Activated CD4-positive, alpha-beta memory T cell treated with anti-CD3 and anti-CD28 coated beads for 36 hours (primary cell): ENCODE measurements at regions of chr2 and their contacts with region 1.

Region 1: DNA sequence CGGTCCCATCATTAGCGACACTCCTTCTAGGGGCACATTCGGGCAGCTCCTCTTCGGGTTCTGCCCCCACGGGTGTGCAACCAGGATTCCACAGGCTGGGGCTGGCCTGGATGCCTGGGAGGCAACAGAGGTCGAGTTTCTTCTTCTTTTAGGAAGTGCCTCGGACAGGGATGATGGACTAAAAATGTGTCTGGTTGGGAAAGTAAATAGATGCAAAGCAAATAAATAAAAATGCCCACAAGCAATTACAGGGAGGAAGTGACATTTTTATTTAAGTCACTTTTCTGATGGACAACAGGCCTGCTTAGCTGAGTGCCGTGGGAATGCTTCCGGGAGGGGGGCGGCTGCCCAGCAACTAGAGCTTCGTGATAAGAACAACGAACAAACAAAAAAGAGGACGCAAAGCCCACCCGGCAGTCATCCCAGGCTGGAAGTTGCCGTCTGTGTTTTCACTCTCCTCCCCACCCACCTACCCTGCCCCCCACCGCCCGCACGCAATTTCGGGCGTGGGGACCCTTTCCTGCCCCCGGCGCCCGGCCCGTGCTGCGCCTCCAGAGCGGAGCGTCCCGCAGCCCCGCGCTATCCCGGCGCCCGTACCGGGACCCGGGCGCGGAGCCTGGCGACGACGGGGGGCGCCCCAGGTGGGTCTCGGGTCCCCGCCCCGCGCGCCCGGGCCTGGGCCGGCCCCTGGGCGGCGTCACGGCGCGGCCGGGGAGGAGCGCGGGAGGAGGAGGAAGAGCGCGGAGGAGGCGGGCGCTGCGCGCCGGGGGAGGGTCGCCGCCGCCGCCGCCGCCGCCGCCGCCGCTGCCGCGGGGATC is 412 bp upstream of the NCK2 start:
- DNase-seq: peak; percentile 70
- H3K4me3 Mint-ChIP-seq: peak overlapping the region; percentile 76
- H3K27ac Mint-ChIP-seq: peak overlapping the region; percentile 86
- H3K4me1 Mint-ChIP-seq: peaks cover 80% of the 10 kb centered on the region
- H3K27me3 Mint-ChIP-seq: no peaks in the 10 kb centered on the region

Region 2: DNA sequence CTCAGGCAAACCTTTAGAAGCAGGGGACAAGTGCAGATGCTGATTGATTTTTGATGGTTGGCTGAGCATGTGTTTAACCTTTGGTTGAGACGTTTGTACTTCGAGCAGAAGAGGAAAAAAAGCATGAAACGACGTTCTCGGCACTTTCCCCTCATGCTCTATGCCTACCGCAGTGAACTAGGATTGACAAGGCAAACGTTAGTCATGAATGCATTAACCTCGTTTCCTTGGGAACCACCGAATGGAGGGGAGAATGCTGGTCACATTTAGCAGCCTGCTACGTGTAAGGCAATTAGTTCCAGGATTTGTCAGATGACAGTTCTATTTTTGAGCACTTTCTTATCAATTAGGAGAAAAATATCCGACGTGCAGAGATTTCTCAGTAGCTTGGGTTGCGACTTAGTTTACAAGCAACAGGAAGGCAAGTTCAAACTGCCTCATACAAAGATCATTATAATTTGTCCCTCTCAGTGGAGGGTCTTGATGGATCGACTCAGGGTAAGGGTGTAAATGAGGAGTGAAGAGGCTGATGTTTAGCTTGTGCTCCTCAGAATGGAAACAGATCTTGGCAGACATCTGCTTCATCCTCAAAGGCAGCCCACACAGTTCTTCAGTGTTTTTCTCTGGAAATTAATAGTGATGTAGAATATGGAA is 550.2 kb before region 1 on chr2:
- CTCF ChIA-PET with region 1: no interaction called
- POLR2A ChIA-PET with region 1: no interaction called
- intact Hi-C with region 1: no loop called
- DNase-seq: no peak
- H3K4me3 Mint-ChIP-seq: no peak overlapping the region
- H3K27ac Mint-ChIP-seq: no peak overlapping the region
- H3K4me1 Mint-ChIP-seq: no peaks in the 10 kb centered on the region
- H3K27me3 Mint-ChIP-seq: peaks cover 20% of the 10 kb centered on the region

Region 3: DNA sequence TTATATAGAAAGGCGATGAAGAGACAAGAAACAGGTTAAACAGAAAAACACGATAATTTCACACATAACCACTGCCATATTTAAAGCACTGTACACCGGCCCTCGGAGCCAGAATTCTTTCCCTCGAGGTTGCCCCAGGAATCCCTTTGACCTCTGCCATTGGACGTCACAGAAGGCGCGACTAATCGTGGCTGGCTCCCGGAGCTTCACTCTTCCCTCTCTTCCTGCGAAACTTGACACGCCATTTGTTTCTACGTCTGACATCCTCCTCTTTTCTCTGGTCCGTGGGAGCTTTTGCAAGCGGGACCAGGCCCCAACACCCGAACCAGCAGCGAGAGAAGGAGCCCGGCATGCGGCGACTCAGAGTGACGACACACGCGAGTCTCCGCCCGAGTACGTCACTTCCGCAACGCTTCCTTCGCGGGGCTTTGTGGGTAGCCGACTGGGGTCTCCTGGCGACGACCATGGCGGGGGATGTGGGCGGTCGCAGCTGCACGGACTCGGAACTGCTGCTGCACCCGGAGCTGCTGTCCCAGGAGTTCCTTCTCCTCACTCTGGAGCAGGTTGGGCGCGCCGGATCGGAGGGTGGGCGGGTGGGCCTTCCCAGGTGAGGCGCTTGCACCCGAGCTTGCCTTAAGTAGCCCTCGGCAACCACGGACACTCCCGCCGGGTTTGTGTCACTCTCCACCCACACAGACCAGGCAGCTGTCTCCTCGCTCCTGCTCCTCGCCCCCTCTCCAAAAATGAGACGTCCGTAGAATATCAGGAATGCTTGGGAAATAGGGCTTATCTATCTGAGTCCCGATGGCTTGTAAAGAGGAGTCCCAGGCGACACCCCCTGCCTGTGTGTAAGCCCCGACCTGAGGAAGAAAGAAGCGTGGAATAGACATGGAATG is 406.9 kb before region 1 on chr2 and contains the start of gene C2orf49:
- CTCF ChIA-PET with region 1: no interaction called
- POLR2A ChIA-PET with region 1: no interaction called
- intact Hi-C with region 1: loop called (anchors 10 kb)
- DNase-seq: peak; percentile 93
- H3K4me3 Mint-ChIP-seq: peak within 1 kb of the TSS; percentile 95
- H3K27ac Mint-ChIP-seq: peak within 1 kb of the TSS; percentile 99
- H3K4me1 Mint-ChIP-seq: peaks cover 33% of the 10 kb centered on the region
- H3K27me3 Mint-ChIP-seq: no peaks in the 10 kb centered on the region
- total RNA-seq, gene C2orf49: 16.9 to 20.2 TPM

Region 4: DNA sequence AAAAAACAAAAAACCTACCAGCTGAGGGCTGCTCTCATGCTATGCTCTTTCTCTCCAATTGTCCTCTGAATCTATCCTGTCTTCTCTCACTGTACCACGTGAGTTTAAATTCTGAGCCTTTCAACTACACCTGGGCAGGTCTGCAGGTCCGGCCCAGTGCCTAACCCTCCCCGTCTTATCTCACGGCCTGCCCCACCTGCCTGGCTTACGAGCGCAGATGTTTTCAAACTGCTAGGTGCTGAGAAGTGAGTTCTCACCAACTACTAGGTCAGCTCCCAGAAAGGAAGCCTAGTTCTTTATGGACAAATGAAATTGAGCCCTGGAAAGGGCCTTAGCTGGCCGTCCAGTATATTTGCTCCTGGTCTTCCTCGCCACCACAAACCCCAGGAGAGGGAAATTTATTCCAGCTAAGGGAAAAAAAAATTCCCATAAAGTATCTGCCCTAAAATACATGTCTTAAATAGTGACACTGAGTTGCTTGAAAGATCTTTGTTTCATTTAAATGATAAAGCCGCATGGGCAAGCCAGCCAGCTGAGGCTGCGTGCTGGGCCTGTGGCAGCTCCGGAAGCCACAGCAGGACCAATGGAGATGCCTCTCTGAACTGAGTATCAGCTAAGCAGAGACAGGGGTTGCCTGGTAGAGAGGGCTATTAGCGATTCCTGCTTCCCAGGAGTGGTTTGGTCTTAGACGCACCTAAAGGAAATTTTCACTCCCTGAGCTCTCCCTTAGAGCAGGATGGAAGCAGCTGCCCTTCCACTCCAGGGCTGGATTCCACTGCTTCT is 92.1 kb before region 1 on chr2:
- CTCF ChIA-PET with region 1: no interaction called
- POLR2A ChIA-PET with region 1: interaction called, 4 read pairs
- intact Hi-C with region 1: loop called (anchors 5 kb)
- DNase-seq: no peak
- H3K4me3 Mint-ChIP-seq: no peak overlapping the region
- H3K27ac Mint-ChIP-seq: no peak overlapping the region
- H3K4me1 Mint-ChIP-seq: peaks cover 4% of the 10 kb centered on the region
- H3K27me3 Mint-ChIP-seq: no peaks in the 10 kb centered on the region

Region 5: DNA sequence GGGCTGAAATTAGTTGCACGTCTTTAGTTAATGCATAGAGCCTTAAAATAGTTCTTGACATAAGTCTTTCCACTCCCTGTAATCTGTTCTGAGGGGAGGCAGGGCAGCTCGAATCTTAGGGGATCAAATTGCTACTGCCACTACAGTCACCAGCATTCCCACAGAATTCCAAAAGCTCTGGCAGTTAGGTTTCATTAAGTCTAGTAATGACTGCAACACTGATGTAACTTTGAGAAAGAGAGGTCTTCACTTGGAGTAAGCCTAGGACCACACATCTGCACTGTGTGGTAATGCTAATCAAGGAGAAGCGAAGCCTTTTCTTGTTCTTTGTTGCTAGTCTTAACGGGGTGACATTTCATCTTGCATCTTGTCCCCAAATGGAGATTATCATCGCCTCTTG is 18.9 kb before region 1 on chr2:
- CTCF ChIA-PET with region 1: no interaction called
- POLR2A ChIA-PET with region 1: no interaction called
- intact Hi-C with region 1: no loop called
- DNase-seq: no peak
- H3K4me3 Mint-ChIP-seq: no peak overlapping the region
- H3K27ac Mint-ChIP-seq: no peak overlapping the region
- H3K4me1 Mint-ChIP-seq: peaks cover 8% of the 10 kb centered on the region
- H3K27me3 Mint-ChIP-seq: no peaks in the 10 kb centered on the region

Region 6: DNA sequence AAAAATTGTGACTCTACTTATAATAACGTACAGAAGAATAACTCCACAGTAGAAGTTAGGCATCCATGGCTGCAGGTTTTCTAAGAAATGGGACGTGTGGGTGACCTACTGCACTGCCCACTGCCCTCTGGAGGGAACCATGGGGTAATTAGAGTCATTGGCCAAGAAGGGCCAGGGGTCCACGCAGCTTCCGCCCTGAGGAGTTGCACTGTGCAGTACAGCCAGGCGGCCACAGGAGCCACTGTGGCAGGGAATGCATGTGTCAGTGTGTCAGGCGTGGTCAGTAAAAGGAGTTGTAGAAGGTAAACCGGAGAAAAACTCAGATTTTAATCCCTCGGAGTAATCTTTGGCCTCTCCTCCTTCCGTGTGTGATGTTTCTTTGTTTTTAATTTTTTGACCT is 25.2 kb after region 1 on chr2:
- CTCF ChIA-PET with region 1: interaction called, 9 read pairs
- POLR2A ChIA-PET with region 1: interaction called, 49 read pairs
- intact Hi-C with region 1: no loop called
- DNase-seq: peak; percentile 39
- H3K4me3 Mint-ChIP-seq: no peak overlapping the region
- H3K27ac Mint-ChIP-seq: peak overlapping the region; percentile 90
- H3K4me1 Mint-ChIP-seq: peaks cover 91% of the 10 kb centered on the region
- H3K27me3 Mint-ChIP-seq: no peaks in the 10 kb centered on the region

Region 7: DNA sequence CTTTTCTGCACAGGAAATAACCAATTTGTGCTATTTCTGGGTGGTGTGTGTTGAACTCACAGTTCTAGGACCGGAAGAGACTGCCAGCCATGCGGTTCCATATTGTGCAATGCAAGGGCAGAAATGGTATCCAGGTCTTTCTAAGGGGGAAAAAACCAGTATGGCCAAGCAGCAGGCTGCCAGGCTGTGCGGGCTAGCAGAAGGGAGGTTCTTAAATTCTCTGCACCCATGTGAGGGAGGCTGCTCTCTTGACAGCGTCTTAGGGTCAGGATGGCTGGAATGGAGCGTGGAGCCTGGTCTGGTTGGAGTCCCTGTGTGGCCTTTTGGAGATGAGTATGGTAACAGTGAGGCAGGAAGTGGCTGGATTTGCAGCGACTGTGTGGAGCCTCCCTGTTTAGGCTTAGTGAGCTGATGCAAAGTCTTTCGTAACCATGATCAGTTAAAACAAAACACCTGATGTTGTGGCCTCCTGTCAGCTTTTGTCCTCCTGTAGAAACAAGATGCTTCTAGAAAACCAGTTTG is 53.1 kb after region 1 on chr2:
- CTCF ChIA-PET with region 1: interaction called, 9 read pairs
- POLR2A ChIA-PET with region 1: interaction called, 20 read pairs
- intact Hi-C with region 1: loop called (anchors 1 kb)
- DNase-seq: peak; percentile 68
- H3K4me3 Mint-ChIP-seq: peak overlapping the region; percentile 52
- H3K27ac Mint-ChIP-seq: peak overlapping the region; percentile 92
- H3K4me1 Mint-ChIP-seq: peaks cover 94% of the 10 kb centered on the region
- H3K27me3 Mint-ChIP-seq: no peaks in the 10 kb centered on the region

Region 8: GRCh38 chr2:105873721-105874120 is 129.4 kb after region 1 on chr2:
- CTCF ChIA-PET with region 1: no interaction called
- POLR2A ChIA-PET with region 1: interaction called, 6 read pairs
- intact Hi-C with region 1: loop called (anchors 5 kb)
- DNase-seq: peak; percentile 89
- H3K4me3 Mint-ChIP-seq: peak overlapping the region; percentile 3
- H3K27ac Mint-ChIP-seq: peak overlapping the region; percentile 87
- H3K4me1 Mint-ChIP-seq: peaks cover 92% of the 10 kb centered on the region
- H3K27me3 Mint-ChIP-seq: no peaks in the 10 kb centered on the region

Region 9: GRCh38 chr2:106147159-106147558 is 402.9 kb after region 1 on chr2:
- CTCF ChIA-PET with region 1: no interaction called
- POLR2A ChIA-PET with region 1: no interaction called
- intact Hi-C with region 1: loop called (anchors 5 kb)
- DNase-seq: no peak
- H3K4me3 Mint-ChIP-seq: no peak overlapping the region
- H3K27ac Mint-ChIP-seq: peak overlapping the region; percentile 85
- H3K4me1 Mint-ChIP-seq: peaks cover 51% of the 10 kb centered on the region
- H3K27me3 Mint-ChIP-seq: no peaks in the 10 kb centered on the region